ENCODE measurements at regions of chr7 and their contacts with region 1.

Region 1: GRCh38 chr7:45111298-45112223 is at the start of gene TBRG4:
- DNase-seq: peak; percentile 91 to 94 (median 94)
- H3K4me3 ChIP-seq: peak within 1 kb of the TSS; percentile 94 to 95
- H3K4me3 Mint-ChIP-seq: peak within 1 kb of the TSS; percentile 91 to 99 (median 97)
- H3K27ac ChIP-seq: peak within 1 kb of the TSS; percentile 87
- H3K27ac Mint-ChIP-seq: peak within 1 kb of the TSS; percentile 97 to 100 (median 99)
- H3K4me1 ChIP-seq: peaks cover 48% of the 10 kb centered on the region
- H3K4me1 Mint-ChIP-seq: peaks cover 28 to 60% (median 44%) of the 10 kb centered on the region in 4 donors
- H3K27me3 ChIP-seq: no peaks in the 10 kb centered on the region
- H3K27me3 Mint-ChIP-seq: peaks cover 4% of the 10 kb centered on the region in 2 donors
- total RNA-seq, gene TBRG4: 103 to 129 TPM

Region 2: GRCh38 chr7:44240983-44241510 is 870.5 kb before region 1 on chr7:
- CTCF ChIA-PET with region 1: no interaction called
- POLR2A ChIA-PET with region 1: no interaction called
- intact Hi-C with region 1: no loop called
- DNase-seq: peak; percentile 54 to 63 (median 57)
- H3K4me3 ChIP-seq: no peak overlapping the region
- H3K4me3 Mint-ChIP-seq: peak overlapping the region in 7 of 8 donors; percentile 25 to 64 (median 52)
- H3K27ac ChIP-seq: no peak overlapping the region
- H3K27ac Mint-ChIP-seq: peak overlapping the region in 3 of 7 donors; percentile 19 to 59 (median 41)
- H3K4me1 ChIP-seq: no peaks in the 10 kb centered on the region
- H3K4me1 Mint-ChIP-seq: no peaks in the 10 kb centered on the region
- H3K27me3 ChIP-seq: no peaks in the 10 kb centered on the region
- H3K27me3 Mint-ChIP-seq: no peaks in the 10 kb centered on the region

Region 3: GRCh38 chr7:44980393-44981034 is 131.0 kb before region 1 on chr7:
- CTCF ChIA-PET with region 1: no interaction called
- POLR2A ChIA-PET with region 1: interaction called, 14 read pairs
- intact Hi-C with region 1: loop called (anchors 1 kb)
- DNase-seq: peak; percentile 51 to 96 (median 64)
- H3K4me3 ChIP-seq: peak overlapping the region in 1 of 2 donors; percentile 2
- H3K4me3 Mint-ChIP-seq: peak overlapping the region; percentile 52 to 99 (median 97)
- H3K27ac ChIP-seq: peak overlapping the region; percentile 85
- H3K27ac Mint-ChIP-seq: peak overlapping the region; percentile 96 to 99 (median 98)
- H3K4me1 ChIP-seq: peaks cover 78% of the 10 kb centered on the region
- H3K4me1 Mint-ChIP-seq: peaks cover 49 to 100% (median 70%) of the 10 kb centered on the region in 4 donors
- H3K27me3 ChIP-seq: no peaks in the 10 kb centered on the region
- H3K27me3 Mint-ChIP-seq: no peaks in the 10 kb centered on the region

Region 4: GRCh38 chr7:45098983-45099839 is 12.3 kb before region 1 on chr7:
- CTCF ChIA-PET with region 1: interaction called, 3 read pairs
- POLR2A ChIA-PET with region 1: interaction called, 10 read pairs
- intact Hi-C with region 1: no loop called
- DNase-seq: no peak
- H3K4me3 ChIP-seq: no peak overlapping the region
- H3K4me3 Mint-ChIP-seq: no peak overlapping the region
- H3K27ac ChIP-seq: no peak overlapping the region
- H3K27ac Mint-ChIP-seq: no peak overlapping the region
- H3K4me1 ChIP-seq: no peaks in the 10 kb centered on the region
- H3K4me1 Mint-ChIP-seq: no peaks in the 10 kb centered on the region
- H3K27me3 ChIP-seq: no peaks in the 10 kb centered on the region
- H3K27me3 Mint-ChIP-seq: no peaks in the 10 kb centered on the region

Region 5: DNA sequence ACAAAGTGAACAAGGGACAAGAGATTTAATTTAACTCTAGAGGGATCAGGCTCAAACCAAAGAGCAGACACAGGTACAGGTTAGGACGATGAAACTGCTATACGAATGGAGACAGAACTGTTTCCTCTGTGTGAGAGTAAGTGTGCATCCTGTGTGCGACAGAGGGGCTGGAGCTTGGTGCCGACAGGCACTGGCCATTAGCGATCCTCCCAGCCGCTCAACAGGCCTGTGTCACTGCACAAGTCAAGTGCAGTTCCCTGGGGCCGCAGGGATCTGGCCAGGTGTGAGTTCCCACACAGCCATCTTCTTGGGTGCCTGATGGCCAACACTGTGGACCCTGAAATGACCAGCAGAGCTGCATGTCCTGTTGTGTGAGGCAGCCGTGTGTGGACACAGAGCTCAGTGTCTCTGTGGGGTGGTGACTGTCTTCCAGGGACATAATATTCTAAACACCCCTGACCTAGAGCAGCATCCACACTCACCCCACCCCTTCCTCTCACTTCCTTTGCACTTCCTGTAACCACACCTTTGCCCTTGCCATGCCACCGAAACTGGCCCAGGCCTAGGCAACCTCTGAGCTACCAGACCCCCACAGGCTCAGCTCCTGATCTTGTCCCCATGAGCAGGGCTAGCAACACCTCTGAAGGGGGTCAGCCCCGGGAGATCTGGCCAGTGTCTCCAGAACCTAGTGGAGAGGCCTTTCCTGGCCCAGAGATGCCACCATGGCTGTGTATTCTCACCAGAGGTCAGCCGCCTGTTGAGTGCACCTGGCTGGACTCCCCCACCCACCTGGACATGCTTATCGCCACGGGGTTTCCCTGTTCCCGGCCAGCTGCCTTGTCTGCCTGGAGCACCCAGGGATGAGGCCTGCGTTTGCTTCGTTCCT is 11.7 kb after region 1 on chr7:
- CTCF ChIA-PET with region 1: no interaction called
- POLR2A ChIA-PET with region 1: interaction called, 32 read pairs
- intact Hi-C with region 1: no loop called
- DNase-seq: peak in 2 of 5 donors; percentile 15 to 23
- H3K4me3 ChIP-seq: peak overlapping the region; percentile 9 to 19
- H3K4me3 Mint-ChIP-seq: peak overlapping the region in 7 of 8 donors; percentile 60 to 87 (median 77)
- H3K27ac ChIP-seq: peak overlapping the region; percentile 29
- H3K27ac Mint-ChIP-seq: peak overlapping the region; percentile 40 to 94 (median 87)
- H3K4me1 ChIP-seq: peaks cover 26% of the 10 kb centered on the region
- H3K4me1 Mint-ChIP-seq: peaks cover 14 to 27% (median 18%) of the 10 kb centered on the region in 4 donors
- H3K27me3 ChIP-seq: no peaks in the 10 kb centered on the region
- H3K27me3 Mint-ChIP-seq: no peaks in the 10 kb centered on the region

Region 6: DNA sequence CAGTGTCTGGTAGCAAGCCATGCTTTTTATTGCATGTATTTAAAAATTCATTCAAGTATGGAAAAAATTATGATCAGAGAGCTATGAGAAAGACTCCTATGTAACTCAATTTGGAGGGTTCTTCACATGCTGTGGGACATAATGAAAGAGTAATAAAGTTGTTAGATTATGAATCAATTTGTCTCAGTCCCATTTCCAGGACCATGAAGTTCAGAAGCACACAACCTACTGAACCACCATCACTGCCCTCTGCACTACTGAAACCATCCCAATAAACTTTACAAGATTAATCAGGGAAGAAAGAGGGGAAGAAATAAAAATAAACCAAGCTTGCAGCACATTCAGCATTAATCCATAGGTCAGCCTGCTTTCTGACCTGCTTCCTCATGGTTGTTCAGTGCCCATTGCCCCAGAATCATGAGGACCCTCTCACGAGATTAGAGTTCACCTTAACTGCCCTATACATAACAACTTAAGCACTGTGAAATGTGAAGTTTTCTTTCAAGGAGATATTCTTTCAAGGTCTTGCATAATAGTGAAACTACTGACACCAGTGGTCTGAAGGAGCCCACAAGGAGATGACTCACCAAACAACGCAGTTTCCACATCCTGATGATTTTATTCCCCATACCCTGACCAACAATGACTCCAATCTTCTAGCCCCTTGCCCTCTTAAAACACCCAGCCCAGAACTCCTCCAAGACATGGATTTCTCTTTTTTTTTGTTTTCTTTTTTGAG is 291.1 kb after region 1 on chr7:
- CTCF ChIA-PET with region 1: no interaction called
- POLR2A ChIA-PET with region 1: no interaction called
- intact Hi-C with region 1: no loop called
- DNase-seq: no peak
- H3K4me3 ChIP-seq: no peak overlapping the region
- H3K4me3 Mint-ChIP-seq: no peak overlapping the region
- H3K27ac ChIP-seq: no peak overlapping the region
- H3K27ac Mint-ChIP-seq: peak overlapping the region in 1 of 7 donors; percentile 58
- H3K4me1 ChIP-seq: no peaks in the 10 kb centered on the region
- H3K4me1 Mint-ChIP-seq: no peaks in the 10 kb centered on the region
- H3K27me3 ChIP-seq: no peaks in the 10 kb centered on the region
- H3K27me3 Mint-ChIP-seq: peaks cover 7% of the 10 kb centered on the region in 2 donors

Region 7: GRCh38 chr7:45524445-45524844 is 412.9 kb after region 1 on chr7:
- CTCF ChIA-PET with region 1: no interaction called
- POLR2A ChIA-PET with region 1: no interaction called
- intact Hi-C with region 1: no loop called
- DNase-seq: no peak
- H3K4me3 ChIP-seq: no peak overlapping the region
- H3K4me3 Mint-ChIP-seq: no peak overlapping the region
- H3K27ac ChIP-seq: no peak overlapping the region
- H3K27ac Mint-ChIP-seq: no peak overlapping the region
- H3K4me1 ChIP-seq: no peaks in the 10 kb centered on the region
- H3K4me1 Mint-ChIP-seq: peaks cover 0 to 1% (median 0%) of the 10 kb centered on the region in 4 donors
- H3K27me3 ChIP-seq: no peaks in the 10 kb centered on the region
- H3K27me3 Mint-ChIP-seq: peaks cover 5 to 8% of the 10 kb centered on the region in 2 donors